Activated CD4-positive, alpha-beta T cell treated with anti-CD3 and anti-CD28 coated beads for 36 hours (primary cell): ENCODE measurements at regions of chr7 and their contacts with region 1.

Region 1: DNA sequence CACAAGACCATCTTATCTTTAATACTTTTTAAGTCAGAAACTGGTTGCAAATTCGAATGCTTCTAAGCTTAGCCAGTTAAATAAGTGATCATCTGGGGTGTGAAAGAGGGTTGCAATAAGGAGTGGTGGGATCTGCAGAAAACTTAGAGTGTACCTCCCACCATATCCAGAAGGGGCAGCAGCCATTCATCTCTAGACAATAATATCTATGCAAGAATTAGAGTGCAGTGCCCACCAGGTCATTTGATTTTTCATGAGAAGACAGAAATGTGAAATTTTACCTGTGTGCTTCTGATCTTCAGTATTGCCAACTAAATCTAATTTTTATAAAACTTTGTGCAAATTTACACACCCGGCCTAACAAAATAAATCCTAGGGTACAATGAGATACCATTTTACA is 127.2 kb upstream of the SP4 start:
- DNase-seq: peak; percentile 7
- ATAC-seq: no peak
- H3K4me3 Mint-ChIP-seq: no peak overlapping the region
- H3K27ac Mint-ChIP-seq: no peak overlapping the region
- H3K4me1 Mint-ChIP-seq: peaks cover 12% of the 10 kb centered on the region
- H3K27me3 Mint-ChIP-seq: no peaks in the 10 kb centered on the region

Region 2: DNA sequence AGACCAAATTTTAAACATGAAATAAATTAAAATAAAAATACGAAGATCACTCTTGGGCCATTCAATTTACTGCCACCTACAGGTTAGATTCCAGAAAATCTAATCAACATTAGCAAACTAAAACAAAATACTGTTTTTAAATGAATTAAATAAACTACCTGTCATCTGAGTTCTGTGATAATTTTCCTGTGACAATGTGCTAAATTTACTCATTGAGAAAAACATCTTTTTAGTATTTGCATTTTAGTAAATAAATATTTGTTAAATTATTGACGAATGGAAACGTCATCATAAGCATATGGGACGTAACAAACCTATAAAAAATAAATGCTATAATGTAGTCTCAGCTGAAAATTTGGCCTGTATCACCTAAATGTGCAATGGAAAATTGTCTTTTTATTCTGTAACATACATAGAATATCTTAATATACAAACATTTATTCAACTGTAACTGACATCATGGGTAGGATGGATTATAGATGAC is 897.9 kb before region 1 on chr7:
- CTCF ChIA-PET with region 1: no interaction called
- POLR2A ChIA-PET with region 1: no interaction called
- intact Hi-C with region 1: no loop called
- DNase-seq: no peak
- ATAC-seq: no peak
- H3K4me3 Mint-ChIP-seq: no peak overlapping the region
- H3K27ac Mint-ChIP-seq: no peak overlapping the region
- H3K4me1 Mint-ChIP-seq: no peaks in the 10 kb centered on the region
- H3K27me3 Mint-ChIP-seq: no peaks in the 10 kb centered on the region

Region 3: DNA sequence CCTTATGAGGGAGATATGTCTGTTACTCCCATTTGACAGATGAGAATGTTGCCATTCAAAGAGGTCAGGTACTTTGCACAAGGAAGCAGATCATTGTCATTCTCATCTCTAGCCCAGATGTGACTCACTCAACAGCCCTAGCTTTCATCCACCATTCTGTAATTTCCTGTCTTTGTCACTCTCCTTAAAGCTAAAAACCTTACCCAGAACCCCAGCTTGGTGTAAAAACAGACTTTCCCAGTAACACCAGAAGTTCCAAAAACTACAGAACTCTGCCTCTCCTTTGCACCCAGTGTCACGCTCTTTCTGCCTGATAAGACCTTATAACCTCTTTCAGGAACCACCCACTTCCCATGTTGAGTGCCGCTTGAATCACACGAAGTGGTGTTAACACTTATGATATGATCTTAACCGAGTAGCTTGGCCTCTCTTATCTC is 38.1 kb after region 1 on chr7:
- CTCF ChIA-PET with region 1: no interaction called
- POLR2A ChIA-PET with region 1: no interaction called
- intact Hi-C with region 1: loop called in 1 of 2 experiments (anchors 2 kb)
- DNase-seq: peak; percentile 76
- ATAC-seq: peak; percentile 95
- H3K4me3 Mint-ChIP-seq: peak overlapping the region; percentile 21
- H3K27ac Mint-ChIP-seq: peak overlapping the region; percentile 95
- H3K4me1 Mint-ChIP-seq: peaks cover 32% of the 10 kb centered on the region
- H3K27me3 Mint-ChIP-seq: peaks cover 4% of the 10 kb centered on the region

Region 4: DNA sequence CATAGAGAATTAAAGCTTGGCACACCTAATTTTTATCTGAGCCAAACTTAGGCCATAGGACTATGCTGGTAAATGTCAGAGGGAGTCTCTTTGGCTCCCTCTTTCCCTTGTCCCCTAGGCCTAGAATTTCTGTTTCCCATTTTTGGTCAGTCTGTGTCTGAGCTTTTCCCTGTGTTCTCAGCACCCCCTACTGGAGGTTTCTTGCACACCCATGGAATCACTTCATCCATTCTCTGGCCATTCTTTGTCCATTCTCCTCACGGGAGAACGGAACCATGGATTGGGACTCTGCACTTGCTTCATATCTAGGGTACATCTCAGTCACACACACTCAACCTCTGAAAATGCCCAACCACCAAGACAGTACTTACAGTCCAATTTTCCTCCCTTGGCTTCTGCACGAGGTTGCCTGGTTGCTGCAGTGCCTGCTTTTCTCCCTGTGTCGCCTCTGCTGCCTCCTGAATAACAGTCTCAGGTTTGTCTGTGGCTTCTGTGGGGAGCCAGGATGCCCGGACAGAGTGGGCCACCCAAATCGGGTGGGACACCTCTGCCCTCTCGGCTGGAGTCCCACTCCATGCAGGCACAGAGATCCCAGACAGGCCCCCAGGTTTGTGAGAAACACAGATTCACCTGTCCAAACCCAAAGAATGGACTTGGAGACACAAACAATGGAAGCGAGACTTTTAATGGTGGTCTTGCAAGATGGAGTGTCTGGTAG is 207.1 kb after region 1 on chr7:
- CTCF ChIA-PET with region 1: no interaction called
- POLR2A ChIA-PET with region 1: no interaction called
- intact Hi-C with region 1: loop called in 1 of 2 experiments (anchors 2 kb)
- DNase-seq: peak; percentile 48
- ATAC-seq: peak; percentile 47
- H3K4me3 Mint-ChIP-seq: no peak overlapping the region
- H3K27ac Mint-ChIP-seq: no peak overlapping the region
- H3K4me1 Mint-ChIP-seq: no peaks in the 10 kb centered on the region
- H3K27me3 Mint-ChIP-seq: no peaks in the 10 kb centered on the region

Region 5: GRCh38 chr7:21939136-21939857 is 638.6 kb after region 1 on chr7:
- CTCF ChIA-PET with region 1: interaction called, 3 read pairs
- POLR2A ChIA-PET with region 1: no interaction called
- intact Hi-C with region 1: loop called in 1 of 2 experiments (anchors 2 kb)
- DNase-seq: peak; percentile 82
- ATAC-seq: peak; percentile 82
- H3K4me3 Mint-ChIP-seq: peak overlapping the region; percentile 53
- H3K27ac Mint-ChIP-seq: peak overlapping the region; percentile 92
- H3K4me1 Mint-ChIP-seq: peaks cover 74% of the 10 kb centered on the region
- H3K27me3 Mint-ChIP-seq: peaks cover 2% of the 10 kb centered on the region